Activated CD8-positive, alpha-beta T cell treated with anti-CD3 and anti-CD28 coated beads for 36 hours (primary cell): ENCODE measurements at regions of chr6 and their contacts with region 1.

Region 1: DNA sequence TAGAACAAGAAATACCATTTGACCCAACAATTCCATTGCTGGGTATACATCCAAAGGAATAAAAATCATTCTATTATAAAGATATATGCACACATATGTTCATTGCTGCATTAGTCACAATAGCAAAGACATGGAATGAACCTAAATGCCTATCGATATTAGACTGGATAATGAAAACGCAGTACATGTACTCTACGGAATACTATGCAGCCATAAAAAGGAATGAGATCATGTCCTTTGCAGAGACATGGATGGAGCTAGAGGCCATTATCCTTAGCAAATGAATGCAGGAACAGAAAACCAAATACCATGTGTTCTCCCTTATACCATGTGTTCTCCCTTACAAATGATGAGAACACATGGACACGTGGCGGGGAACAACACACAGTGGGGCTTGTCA is 190.2 kb downstream of the HACE1 start:
- DNase-seq: no peak
- ATAC-seq: no peak
- H3K4me3 Mint-ChIP-seq: no peak overlapping the region
- H3K27ac Mint-ChIP-seq: no peak overlapping the region
- H3K4me1 Mint-ChIP-seq: no peaks in the 10 kb centered on the region
- H3K27me3 Mint-ChIP-seq: peaks cover 3% of the 10 kb centered on the region
- CTCF ChIP-seq: no peak

Region 2: DNA sequence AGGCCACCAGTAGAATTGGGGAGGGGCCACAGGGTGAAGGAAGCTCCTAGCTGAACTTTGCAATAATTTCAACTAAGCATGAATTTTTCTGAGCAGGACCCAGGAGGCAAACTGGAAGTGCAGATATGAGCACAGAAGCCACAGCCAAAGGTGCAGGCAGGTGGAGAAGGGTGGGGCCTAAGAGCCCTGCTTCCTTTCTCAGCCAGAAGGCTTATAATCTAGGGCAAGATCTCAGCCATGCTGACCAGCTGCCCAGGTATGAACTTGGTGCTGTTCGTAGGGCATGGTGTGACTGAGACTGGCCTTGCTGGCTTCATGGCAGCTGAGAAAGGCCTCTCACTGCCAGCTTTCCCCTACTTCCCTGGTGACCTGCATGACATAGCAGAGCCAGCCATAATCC is 10.4 kb before region 1 on chr6:
- CTCF ChIA-PET with region 1: no interaction called
- POLR2A ChIA-PET with region 1: no interaction called
- intact Hi-C with region 1: loop called (anchors 1 kb)
- DNase-seq: no peak
- ATAC-seq: no peak
- H3K4me3 Mint-ChIP-seq: no peak overlapping the region
- H3K27ac Mint-ChIP-seq: no peak overlapping the region
- H3K4me1 Mint-ChIP-seq: no peaks in the 10 kb centered on the region
- H3K27me3 Mint-ChIP-seq: peaks cover 2% of the 10 kb centered on the region
- CTCF ChIP-seq: no peak